ENCODE measurements at regions of chr17 and their contacts with region 1.

Region 1: GRCh38 chr17:77494664-77495435 is 354.1 kb downstream of the SEC14L1 start:
- DNase-seq: peak; percentile 50 to 91 (median 81)
- ATAC-seq: peak; percentile 78 to 93 (median 86)
- H3K4me3 ChIP-seq: no peak overlapping the region
- H3K27ac ChIP-seq: no peak overlapping the region
- H3K4me1 ChIP-seq: no peaks in the 10 kb centered on the region
- H3K27me3 ChIP-seq: no peaks in the 10 kb centered on the region
- CTCF ChIP-seq: peak; percentile 89 to 96 (median 93)

Region 2: DNA sequence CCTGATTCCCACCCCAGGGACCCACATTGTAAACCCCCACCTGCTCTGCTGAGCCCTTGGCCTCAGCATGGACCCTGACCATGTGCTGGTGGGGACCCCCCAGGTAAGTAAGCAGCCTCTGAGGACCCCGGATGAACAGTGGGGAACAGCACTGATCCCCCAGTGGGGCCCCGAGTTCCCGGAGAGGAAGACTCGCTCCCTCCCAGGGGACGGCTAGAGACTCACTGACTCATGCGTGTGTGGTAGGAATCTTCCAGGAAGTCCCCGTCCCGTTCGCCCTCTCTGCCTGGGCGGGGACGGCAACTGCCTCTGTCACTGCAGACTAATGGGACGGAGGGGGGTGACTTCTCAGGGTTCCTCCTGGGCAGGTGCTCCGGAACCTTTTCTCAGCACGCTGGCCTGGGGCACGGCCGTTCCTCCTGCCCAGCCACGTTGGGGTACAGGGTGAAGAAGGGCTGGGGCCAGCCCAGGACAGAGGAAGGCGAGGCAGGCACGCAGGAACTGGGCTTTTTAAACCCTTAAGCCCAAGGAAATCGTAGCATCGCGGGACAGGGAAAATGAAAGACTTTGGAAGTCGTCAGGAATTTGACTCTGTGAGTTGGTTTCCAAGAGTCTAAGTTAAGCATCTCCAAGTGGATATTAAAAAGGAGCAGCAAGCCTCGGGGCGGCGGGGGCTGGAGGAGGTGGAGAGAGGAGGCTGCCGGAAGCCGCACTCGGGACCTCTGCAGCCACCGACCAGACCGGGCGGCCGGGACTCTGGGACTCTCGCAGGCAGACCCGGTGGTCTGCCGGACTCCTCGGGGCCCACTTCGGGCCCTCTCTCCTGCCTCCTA is 175.4 kb before region 1 on chr17:
- intact Hi-C with region 1: loop called in 1 of 3 experiments (anchors 10 kb)
- DNase-seq: peak in 5 of 6 donors; percentile 57 to 76 (median 70)
- ATAC-seq: peak; percentile 55 to 81 (median 78)
- H3K4me3 ChIP-seq: peak overlapping the region in 2 of 4 donors; percentile 3 to 35
- H3K27ac ChIP-seq: peak overlapping the region; percentile 48 to 89 (median 70)
- H3K4me1 ChIP-seq: peaks cover 0 to 12% (median 0%) of the 10 kb centered on the region in 3 donors
- H3K27me3 ChIP-seq: no peaks in the 10 kb centered on the region
- CTCF ChIP-seq: no peak

Region 3: DNA sequence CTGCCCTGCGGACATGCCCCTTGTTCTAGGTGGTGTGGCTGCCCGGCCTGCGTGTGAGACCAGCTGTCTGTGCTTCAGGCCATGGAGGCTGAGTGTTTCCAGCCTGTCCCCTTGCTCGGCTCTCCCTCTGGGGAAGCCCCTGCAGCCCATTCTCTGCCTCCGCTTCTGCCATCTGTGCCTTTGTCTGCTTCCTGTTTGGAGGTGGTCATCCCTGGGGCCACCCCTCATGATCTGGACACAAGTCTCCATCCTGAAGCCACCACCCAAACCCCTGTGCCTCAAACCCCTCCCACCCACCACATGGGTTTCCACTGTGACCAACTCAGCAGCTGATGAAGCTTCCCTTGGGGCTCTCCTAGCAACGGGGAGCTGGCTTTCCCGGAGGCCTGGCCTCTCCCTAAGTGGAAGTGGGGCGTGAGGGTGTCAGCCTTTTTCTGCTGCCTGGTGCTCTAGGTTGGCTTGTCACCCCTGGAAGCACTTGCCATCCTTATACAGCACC is 169.2 kb before region 1 on chr17:
- intact Hi-C with region 1: loop called (anchors 2 to 10 kb)
- DNase-seq: no peak
- ATAC-seq: peak in 2 of 4 donors; percentile 5 to 29
- H3K4me3 ChIP-seq: no peak overlapping the region
- H3K27ac ChIP-seq: peak overlapping the region in 2 of 4 donors; percentile 44 to 47
- H3K4me1 ChIP-seq: peaks cover 0 to 9% (median 0%) of the 10 kb centered on the region in 3 donors
- H3K27me3 ChIP-seq: no peaks in the 10 kb centered on the region
- CTCF ChIP-seq: no peak

Region 4: DNA sequence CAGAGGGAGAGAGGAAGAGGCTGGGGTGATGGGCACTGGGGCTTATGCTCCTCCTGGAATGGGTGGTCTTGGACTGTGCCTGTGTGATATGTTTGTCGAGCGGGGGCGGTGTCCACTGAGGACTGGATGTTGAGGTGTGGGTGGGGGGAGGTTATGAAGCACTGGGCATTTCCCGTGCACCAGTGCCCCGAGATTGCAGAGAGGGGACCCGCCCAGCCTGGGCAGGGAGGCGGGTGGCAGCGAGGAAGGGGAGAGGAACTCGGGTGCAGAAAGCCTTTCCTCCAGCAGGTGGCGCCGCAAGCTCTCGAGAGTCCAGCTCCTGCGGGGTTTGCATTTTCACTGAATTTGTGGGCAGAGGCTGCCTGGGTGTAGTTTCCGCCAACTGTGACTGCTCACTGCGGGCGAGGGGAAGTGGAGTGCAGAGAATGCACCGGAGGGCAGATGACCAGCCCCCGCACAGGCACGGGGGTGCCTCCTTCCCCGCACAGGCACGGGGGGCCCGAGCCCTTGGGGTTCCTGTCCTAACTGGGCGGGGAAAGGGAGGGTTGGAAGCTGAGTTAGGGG is 163.5 kb before region 1 on chr17:
- intact Hi-C with region 1: loop called (anchors 2 to 10 kb)
- DNase-seq: peak; percentile 75 to 99 (median 90)
- ATAC-seq: peak; percentile 82 to 97 (median 92)
- H3K4me3 ChIP-seq: no peak overlapping the region
- H3K27ac ChIP-seq: peak overlapping the region in 1 of 4 donors; percentile 2
- H3K4me1 ChIP-seq: no peaks in the 10 kb centered on the region
- H3K27me3 ChIP-seq: no peaks in the 10 kb centered on the region
- CTCF ChIP-seq: peak; percentile 88 to 93 (median 90)

Region 5: GRCh38 chr17:77429919-77430752 is 64.7 kb before region 1 on chr17:
- intact Hi-C with region 1: loop called in 1 of 3 experiments (anchors 5 kb)
- DNase-seq: peak; percentile 74 to 84 (median 80)
- ATAC-seq: peak; percentile 65 to 81 (median 70)
- H3K4me3 ChIP-seq: no peak overlapping the region
- H3K27ac ChIP-seq: peak overlapping the region; percentile 42 to 73 (median 58)
- H3K4me1 ChIP-seq: peaks cover 0 to 29% (median 4%) of the 10 kb centered on the region in 3 donors
- H3K27me3 ChIP-seq: no peaks in the 10 kb centered on the region
- CTCF ChIP-seq: peak; percentile 35 to 67 (median 49)

Measured in pancreas (tissue), 10 donors.